ENCODE measurements at regions of chr19 and their contacts with region 1.

Region 1: DNA sequence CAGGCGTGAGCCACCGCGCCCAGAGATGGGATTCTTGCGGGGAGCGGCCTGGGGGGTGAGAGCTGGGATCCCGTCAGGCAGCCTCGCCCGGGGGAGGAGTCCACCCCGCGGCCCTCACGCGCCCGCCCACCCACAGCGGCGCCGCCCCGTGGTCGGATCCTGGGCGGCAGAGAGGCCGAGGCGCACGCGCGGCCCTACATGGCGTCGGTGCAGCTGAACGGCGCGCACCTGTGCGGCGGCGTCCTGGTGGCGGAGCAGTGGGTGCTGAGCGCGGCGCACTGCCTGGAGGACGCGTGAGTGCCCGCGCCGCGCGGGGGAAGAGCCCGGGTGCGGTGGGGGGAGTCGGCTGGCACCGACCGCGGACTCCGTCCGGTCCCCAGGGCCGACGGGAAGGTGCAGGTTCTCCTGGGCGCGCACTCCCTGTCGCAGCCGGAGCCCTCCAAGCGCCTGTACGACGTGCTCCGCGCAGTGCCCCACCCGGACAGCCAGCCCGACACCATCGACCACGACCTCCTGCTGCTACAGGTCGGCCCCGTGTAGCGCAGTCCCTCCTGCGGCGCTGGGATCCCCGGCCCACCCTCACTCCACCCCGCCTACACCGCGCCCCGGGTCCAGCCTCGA is 1.1 kb downstream of the CFD start:
- DNase-seq: peak; percentile 60
- ATAC-seq: no peak
- H3K4me3 Mint-ChIP-seq: 0 out of 2 replicates have a peak overlapping the region, but pooled peaks have one; percentile 22
- H3K27ac Mint-ChIP-seq: no peak overlapping the region
- H3K4me1 Mint-ChIP-seq: no peaks in the 10 kb centered on the region; the same call in 1 of the 2 replicates
- H3K27me3 Mint-ChIP-seq: peaks cover 35% of the 10 kb centered on the region
- CTCF ChIP-seq: no peak

Region 2: GRCh38 chr19:850221-850978 is 10.2 kb before region 1 on chr19:
- CTCF ChIA-PET with region 1: interaction called, 10 read pairs
- POLR2A ChIA-PET with region 1: no interaction called
- DNase-seq: peak; percentile 55
- ATAC-seq: peak; percentile 50
- H3K4me3 Mint-ChIP-seq: no peak overlapping the region
- H3K27ac Mint-ChIP-seq: no peak overlapping the region
- H3K4me1 Mint-ChIP-seq: no peaks in the 10 kb centered on the region
- H3K27me3 Mint-ChIP-seq: peaks cover 5% of the 10 kb centered on the region; the same call in 1 of the 2 replicates
- CTCF ChIP-seq: no peak

Region 3: GRCh38 chr19:913080-913748 is 52.6 kb after region 1 on chr19 and contains the start of gene R3HDM4:
- CTCF ChIA-PET with region 1: interaction called, 18 read pairs
- POLR2A ChIA-PET with region 1: no interaction called
- DNase-seq: peak; percentile 64
- ATAC-seq: peak; percentile 43
- H3K4me3 Mint-ChIP-seq: peak within 1 kb of the TSS; percentile 70
- H3K27ac Mint-ChIP-seq: no peak within 1 kb of the TSS
- H3K4me1 Mint-ChIP-seq: no peaks in the 10 kb centered on the region
- H3K27me3 Mint-ChIP-seq: peaks cover 35% of the 10 kb centered on the region
- CTCF ChIP-seq: no peak
- total RNA-seq, gene R3HDM4: 85.5 to 99.5 TPM (median 88.3 TPM) in 3 replicates

Region 4: DNA sequence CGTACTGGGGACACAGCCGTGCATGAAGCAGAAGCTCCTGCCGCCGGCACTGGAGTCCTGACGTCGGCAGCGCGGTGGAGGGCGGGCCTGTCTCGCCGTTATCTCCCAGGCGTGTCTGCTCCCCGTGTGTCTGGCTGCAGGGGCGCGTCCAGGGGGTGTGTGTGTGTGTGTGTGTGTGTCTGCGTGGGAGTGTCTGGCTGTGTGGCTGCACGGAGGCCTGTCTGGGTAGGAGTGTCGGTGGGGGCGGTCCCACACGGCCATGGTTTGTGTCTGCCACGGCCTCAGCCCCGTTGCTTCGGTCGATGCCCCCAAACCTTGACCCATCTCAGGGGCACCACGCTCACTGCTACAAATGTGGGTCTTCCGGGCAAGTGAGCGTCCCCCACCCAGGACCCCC is 83.6 kb after region 1 on chr19:
- CTCF ChIA-PET with region 1: no interaction called
- POLR2A ChIA-PET with region 1: no interaction called
- DNase-seq: no peak
- ATAC-seq: no peak
- H3K4me3 Mint-ChIP-seq: no peak overlapping the region
- H3K27ac Mint-ChIP-seq: no peak overlapping the region
- H3K4me1 Mint-ChIP-seq: no peaks in the 10 kb centered on the region
- H3K27me3 Mint-ChIP-seq: no peaks in the 10 kb centered on the region
- CTCF ChIP-seq: no peak

Measured in WTC11 (cell line).